IMR-90 (cell line): ENCODE measurements at regions of chr10 and their contacts with region 1.

Region 1: DNA sequence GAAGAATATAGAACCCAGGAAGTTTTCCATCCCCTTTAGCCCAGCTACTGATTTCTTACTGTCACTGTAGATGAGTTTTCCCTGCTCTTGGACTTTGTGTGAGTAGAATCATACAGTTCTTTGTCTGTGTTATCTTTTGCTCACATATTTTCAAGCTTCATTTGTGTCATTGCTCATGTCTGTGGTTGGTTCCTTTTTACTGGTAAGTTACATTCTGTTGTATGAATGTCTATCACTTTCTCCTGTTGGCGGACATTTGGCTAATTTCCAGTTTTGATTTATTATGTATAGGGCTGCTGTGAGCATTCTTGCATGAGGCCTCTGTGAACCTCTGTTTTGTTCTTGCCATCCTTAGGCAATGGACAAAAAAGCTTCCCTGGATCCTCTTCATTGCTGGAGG is 5.3 kb downstream of the GLRX3 start:
- DNase-seq: peak; percentile 36
- ATAC-seq: no peak
- H3K4me3 ChIP-seq: no peak overlapping the region
- H3K27ac ChIP-seq: no peak overlapping the region
- H3K4me1 ChIP-seq: peaks cover 14% of the 10 kb centered on the region
- H3K27me3 ChIP-seq: no peaks in the 10 kb centered on the region
- CTCF ChIP-seq: no peak
- POLR2A ChIP-seq: no peak
- RAD21 ChIP-seq: no peak

Region 2: DNA sequence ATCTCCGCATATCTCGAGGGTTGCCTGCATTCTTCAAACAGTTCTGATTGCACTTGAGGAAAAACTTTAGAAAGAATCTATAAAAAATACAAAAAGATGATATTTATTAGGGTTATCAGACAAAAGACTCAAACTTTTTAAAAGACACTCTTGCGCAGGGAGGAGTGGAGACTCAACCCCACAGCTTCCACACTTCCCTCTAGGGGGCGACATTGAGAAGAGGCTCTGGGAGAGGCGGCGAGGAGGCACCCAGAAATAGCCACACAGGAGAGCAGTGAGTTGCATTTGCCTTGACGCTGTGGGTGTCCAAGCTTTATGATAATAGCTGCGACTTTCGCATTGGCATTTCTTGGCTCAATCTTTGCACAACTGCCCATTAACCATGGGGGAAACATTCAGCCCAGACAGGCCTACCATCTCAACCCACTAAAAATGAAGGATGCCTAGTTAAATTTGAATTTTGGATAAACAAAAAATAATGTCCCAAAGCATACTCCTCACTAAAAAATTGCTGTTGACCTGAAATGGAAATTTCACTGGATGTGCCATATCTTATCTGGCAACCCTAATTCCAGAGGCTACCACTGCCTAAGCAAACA is 263.6 kb before region 1 on chr10:
- CTCF ChIA-PET with region 1: no interaction called
- POLR2A ChIA-PET with region 1: interaction called, 11 read pairs
- dilution Hi-C with region 1: no loop called
- in situ Hi-C with region 1: no loop called
- intact Hi-C with region 1: no loop called
- DNase-seq: no peak
- ATAC-seq: no peak
- H3K4me3 ChIP-seq: no peak overlapping the region
- H3K27ac ChIP-seq: no peak overlapping the region
- H3K4me1 ChIP-seq: no peaks in the 10 kb centered on the region
- H3K27me3 ChIP-seq: no peaks in the 10 kb centered on the region
- CTCF ChIP-seq: no peak
- POLR2A ChIP-seq: no peak
- RAD21 ChIP-seq: no peak

Region 3: DNA sequence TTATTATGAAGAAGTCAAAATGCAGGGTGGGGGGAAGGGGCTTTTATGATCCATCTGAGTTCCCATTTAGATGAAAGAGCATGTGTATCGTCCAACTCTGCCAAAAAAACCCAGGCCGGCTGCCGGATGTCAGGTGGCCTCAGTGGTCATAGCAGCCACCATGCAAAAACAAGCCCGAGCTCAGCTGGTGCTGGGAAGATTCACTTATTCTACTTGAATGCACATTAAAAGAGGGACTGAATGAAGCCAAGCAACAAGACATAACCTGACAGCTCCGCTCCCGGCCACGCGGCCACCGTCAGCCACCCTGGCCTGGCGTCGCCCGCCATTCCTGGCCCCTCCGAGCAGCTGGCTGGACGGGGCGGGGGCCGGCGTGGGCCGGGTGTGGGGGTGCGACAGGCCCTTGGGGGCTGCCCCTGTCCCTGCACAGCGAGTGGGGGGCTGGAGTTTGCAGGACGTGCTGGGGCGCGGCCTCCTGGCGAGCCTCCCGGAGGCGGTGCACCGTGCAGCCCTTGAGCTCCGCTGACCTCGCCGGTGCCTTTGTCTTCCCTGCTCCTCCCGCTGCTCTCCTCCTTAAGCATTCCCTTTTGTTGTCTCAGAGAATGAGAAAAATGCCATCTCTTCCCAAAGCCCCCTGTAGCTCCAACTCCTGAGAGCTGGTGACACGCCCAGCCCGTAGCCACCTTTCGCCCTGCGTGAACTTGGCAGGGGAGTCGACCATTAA is 245.2 kb before region 1 on chr10:
- CTCF ChIA-PET with region 1: no interaction called
- POLR2A ChIA-PET with region 1: no interaction called
- dilution Hi-C with region 1: no loop called
- in situ Hi-C with region 1: no loop called
- intact Hi-C with region 1: no loop called
- DNase-seq: no peak
- ATAC-seq: no peak
- H3K4me3 ChIP-seq: no peak overlapping the region
- H3K27ac ChIP-seq: no peak overlapping the region
- H3K4me1 ChIP-seq: no peaks in the 10 kb centered on the region; the same call in 1 of the 2 replicates
- H3K27me3 ChIP-seq: no peaks in the 10 kb centered on the region; the same call in 1 of the 2 replicates
- CTCF ChIP-seq: no peak
- POLR2A ChIP-seq: no peak
- RAD21 ChIP-seq: no peak

Region 4: DNA sequence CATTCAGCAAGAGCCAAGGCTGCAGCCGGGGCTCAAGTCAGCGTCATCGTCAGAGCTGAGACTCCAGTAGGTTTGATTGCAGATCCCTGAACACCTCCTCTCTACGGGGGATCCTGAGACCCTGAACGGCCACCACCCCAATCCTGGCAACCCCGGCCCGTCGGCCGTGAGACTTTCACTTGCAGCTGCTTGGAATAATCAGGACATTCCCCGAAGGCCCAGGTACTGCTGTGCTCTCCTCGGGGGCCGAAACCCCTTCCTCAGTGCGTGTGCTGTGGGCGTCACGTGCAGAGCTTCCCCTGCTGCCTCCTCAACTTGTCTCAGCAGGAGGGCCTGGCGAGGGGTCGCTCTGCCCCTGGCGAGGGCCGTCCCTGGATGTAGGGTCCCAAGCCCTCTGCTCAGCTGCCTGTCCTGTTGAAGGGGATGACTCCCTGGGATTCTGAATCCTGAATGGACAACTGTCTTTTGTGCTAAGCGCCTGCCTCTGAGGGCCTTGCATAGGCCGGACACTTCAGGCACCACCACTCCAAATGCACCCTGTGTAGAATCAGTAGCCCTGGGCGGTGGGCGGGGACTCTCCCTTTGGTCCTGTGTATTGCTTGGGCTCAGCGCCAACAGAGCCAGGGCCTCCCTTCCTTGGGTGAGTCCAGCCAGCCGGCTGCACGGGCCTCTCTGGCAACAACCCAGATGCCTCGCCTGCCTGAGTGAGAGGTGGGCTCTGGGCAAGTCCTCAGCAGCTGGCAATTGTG is 113.6 kb before region 1 on chr10:
- CTCF ChIA-PET with region 1: no interaction called
- POLR2A ChIA-PET with region 1: no interaction called
- dilution Hi-C with region 1: no loop called
- in situ Hi-C with region 1: no loop called
- intact Hi-C with region 1: no loop called
- DNase-seq: no peak
- ATAC-seq: no peak
- H3K4me3 ChIP-seq: no peak overlapping the region
- H3K27ac ChIP-seq: no peak overlapping the region
- H3K4me1 ChIP-seq: no peaks in the 10 kb centered on the region
- H3K27me3 ChIP-seq: no peaks in the 10 kb centered on the region
- CTCF ChIP-seq: no peak
- POLR2A ChIP-seq: no peak
- RAD21 ChIP-seq: no peak

Region 5: DNA sequence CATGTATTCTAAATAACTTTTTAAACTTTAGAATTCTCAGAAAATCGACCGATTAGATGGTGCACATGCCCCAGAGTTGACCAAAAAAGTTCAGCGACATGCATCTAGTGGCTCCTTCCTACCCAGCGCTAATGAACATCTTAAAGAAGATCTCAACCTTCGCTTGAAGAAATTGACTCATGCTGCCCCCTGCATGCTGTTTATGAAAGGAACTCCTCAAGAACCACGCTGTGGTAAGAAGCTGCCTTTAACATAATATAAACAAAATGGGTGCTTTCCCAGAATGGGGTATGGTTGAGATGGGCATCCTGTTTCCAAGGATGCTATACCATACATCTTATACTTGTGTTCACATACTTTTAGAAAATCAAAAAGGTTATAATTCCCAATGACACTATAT is 19.3 kb after region 1 on chr10:
- CTCF ChIA-PET with region 1: no interaction called
- POLR2A ChIA-PET with region 1: no interaction called
- dilution Hi-C with region 1: no loop called
- in situ Hi-C with region 1: no loop called
- intact Hi-C with region 1: no loop called
- DNase-seq: peak; percentile 41
- ATAC-seq: peak; percentile 40
- H3K4me3 ChIP-seq: no peak overlapping the region
- H3K27ac ChIP-seq: no peak overlapping the region
- H3K4me1 ChIP-seq: no peaks in the 10 kb centered on the region
- H3K27me3 ChIP-seq: no peaks in the 10 kb centered on the region
- CTCF ChIP-seq: 0 out of 2 replicates have a peak, but pooled peaks have one; percentile 25
- POLR2A ChIP-seq: no peak
- RAD21 ChIP-seq: peak; percentile 22